K562 (cell line): ENCODE measurements at regions of chr5 and their contacts with region 1.

Region 1: DNA sequence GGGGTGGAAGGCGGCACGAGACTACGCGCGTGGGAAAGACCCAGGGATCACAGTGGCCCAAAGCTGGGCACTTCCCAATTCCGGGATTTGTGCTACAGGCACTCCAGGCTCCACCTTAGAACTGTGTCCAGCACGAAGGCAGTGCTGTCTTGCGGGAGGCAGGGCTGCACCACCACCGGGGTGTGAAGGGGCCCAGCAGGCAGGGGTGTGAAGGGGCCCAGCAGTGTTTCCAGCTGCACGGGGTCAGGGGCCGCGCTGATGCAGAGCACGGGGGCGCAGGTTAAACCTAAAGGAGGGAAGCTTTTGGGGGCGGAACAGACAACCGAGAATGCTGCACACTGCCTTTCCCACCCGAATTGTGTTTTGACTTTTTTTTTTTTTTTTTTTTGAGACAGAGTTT is 1.1 kb upstream of the PDCD6 start:
- DNase-seq: peak in 1 of 4 experiments; percentile 20
- ATAC-seq: no peak
- H3K4me3 ChIP-seq: peak overlapping the region; percentile 96
- H3K27ac ChIP-seq: no peak overlapping the region
- H3K4me1 ChIP-seq: peaks cover 5 to 16% of the 10 kb centered on the region in 2 experiments; a peak in 4 of 5 replicates
- H3K27me3 ChIP-seq: no peaks in the 10 kb centered on the region
- CTCF ChIP-seq: no peak
- EP300 ChIP-seq: no peak
- POLR2A ChIP-seq: no peak
- RAD21 ChIP-seq: no peak

Region 2: DNA sequence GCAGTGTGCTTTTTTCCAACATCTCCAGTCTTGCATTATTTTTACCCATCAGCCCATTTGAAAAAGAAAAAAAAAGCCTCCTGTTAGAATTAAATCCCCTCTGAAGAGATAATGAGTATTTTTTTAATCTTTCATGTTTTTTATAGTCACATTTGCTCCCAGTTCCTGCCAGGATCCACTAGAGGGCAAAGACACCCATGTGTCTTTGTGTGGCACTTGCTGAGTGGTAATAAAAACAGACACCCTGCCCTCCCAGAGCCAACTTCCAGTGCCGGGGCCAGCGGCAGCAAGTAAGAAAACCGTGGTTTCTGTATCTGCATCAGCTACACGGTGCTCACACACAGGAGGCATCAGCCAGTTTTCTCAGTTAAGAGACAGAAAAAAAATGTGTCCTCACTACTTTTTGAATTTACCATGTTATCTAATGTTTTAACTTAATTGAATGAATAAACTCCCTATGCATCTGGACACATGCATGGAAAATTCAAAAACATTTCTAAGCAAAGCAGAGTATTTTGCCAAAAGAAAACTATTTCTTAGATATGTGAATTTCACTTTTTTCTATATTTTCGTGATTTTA is 248.6 kb before region 1 on chr5:
- CTCF ChIA-PET with region 1: no interaction called
- POLR2A ChIA-PET with region 1: no interaction called
- in situ Hi-C with region 1: no loop called
- intact Hi-C with region 1: no loop called
- DNase-seq: no peak
- ATAC-seq: no peak
- H3K4me3 ChIP-seq: no peak overlapping the region
- H3K27ac ChIP-seq: no peak overlapping the region
- H3K4me1 ChIP-seq: no peaks in the 10 kb centered on the region
- H3K27me3 ChIP-seq: peaks cover 0 to 9% of the 10 kb centered on the region in 2 experiments; a peak in 1 of 5 replicates
- CTCF ChIP-seq: peak; percentile 16 to 24 (median 24); a peak in 3 of 6 replicates
- EP300 ChIP-seq: no peak
- POLR2A ChIP-seq: no peak
- RAD21 ChIP-seq: no peak; a peak in 1 of 4 replicates

Region 3: GRCh38 chr5:102411-103043 is 167.8 kb before region 1 on chr5:
- CTCF ChIA-PET with region 1: no interaction called
- POLR2A ChIA-PET with region 1: no interaction called
- in situ Hi-C with region 1: no loop called
- intact Hi-C with region 1: no loop called
- DNase-seq: no peak
- ATAC-seq: no peak
- H3K4me3 ChIP-seq: no peak overlapping the region
- H3K27ac ChIP-seq: no peak overlapping the region
- H3K4me1 ChIP-seq: no peaks in the 10 kb centered on the region
- H3K27me3 ChIP-seq: peaks cover 35 to 45% of the 10 kb centered on the region in 2 experiments; a peak in 4 of 5 replicates
- CTCF ChIP-seq: no peak
- EP300 ChIP-seq: no peak
- POLR2A ChIP-seq: no peak
- RAD21 ChIP-seq: no peak

Region 4: DNA sequence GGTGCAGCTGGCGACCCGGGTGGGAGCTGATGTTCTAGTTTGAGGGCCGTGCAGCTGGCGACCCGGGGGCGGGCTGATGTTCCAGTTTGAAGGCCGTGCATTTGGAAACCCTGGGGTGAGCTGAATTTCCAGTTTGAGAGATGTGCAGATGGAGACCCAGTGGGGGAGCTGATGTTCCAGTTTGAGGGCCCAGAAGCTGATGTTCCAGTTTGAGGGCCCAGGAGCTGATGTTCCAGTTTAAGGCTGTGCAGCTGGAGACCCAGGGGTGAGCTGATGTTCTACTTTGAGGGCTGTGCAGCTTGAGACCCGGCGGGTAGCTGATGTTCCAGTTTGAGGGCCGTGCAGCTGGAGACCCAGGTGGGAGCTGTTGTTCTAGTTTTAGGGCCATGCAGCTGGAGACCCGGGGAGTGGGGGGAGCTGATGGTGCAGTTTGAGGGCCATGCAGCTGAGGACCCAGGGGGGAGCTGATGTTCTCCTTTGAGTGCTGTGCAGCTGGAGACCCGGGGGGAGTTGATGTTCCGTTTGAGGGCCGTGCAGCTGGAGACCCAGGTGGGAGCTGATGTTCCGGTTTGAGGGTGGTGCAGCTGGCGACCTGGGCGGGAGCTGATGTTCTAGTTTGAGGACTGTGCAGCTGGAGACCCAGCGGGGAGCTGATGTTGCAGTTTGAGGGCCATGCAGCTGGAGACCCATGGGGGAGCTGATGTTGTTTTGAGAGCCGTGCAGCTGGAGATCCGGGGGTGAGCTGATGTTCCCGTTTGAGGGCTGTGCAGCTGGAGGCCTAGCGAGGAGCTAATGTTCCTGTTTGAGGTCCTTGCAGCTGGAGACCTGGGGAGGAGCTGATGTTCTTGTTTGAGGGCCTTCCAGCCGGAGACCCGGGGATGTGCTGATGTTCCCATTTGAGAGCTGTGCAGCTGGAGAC is 15.6 kb after region 1 on chr5:
- CTCF ChIA-PET with region 1: no interaction called
- POLR2A ChIA-PET with region 1: interaction called, 45 read pairs
- in situ Hi-C with region 1: no loop called
- intact Hi-C with region 1: no loop called
- DNase-seq: no peak
- ATAC-seq: no peak
- H3K4me3 ChIP-seq: no peak overlapping the region
- H3K27ac ChIP-seq: no peak overlapping the region
- H3K4me1 ChIP-seq: peaks cover 0 to 4% of the 10 kb centered on the region in 2 experiments; a peak in 1 of 5 replicates
- H3K27me3 ChIP-seq: no peaks in the 10 kb centered on the region
- CTCF ChIP-seq: no peak
- EP300 ChIP-seq: no peak
- POLR2A ChIP-seq: no peak
- RAD21 ChIP-seq: no peak

Region 5: DNA sequence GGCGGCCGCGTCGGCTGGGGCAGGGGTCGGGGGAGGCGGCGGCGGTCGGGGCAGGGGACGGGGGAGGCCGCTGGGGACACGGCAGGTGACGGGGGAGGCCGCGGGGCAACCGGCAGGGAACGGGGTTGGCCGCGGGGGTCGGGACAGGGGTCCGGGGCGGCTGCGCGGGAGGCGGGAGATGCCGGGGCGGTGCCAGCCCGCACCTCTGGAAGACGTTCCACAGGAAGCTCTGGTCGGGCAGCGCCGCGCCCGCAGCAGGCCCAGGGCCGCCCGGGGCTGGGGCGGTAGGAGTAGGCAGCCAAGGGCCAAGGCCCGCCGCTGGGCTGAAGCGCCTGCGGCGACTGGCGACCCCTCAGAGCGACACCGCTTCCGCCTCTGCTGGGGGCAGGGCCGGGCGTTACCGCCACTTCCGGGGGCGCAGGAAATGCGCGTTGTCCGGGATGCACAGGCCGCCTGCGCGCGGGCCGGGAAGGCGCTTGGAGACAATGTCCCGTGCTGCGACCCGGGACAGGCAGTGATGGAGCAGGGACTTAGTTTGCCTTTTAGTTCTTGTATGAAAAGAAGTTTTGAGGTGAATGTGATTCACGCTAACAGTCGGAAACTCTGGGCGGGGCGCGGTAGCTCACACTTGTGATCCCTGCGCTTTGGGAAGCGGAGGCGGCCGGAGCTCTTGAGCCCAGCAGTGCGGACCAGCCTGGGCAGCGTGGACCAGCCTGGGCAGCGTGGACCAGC is 1363.4 kb after region 1 on chr5:
- CTCF ChIA-PET with region 1: no interaction called
- POLR2A ChIA-PET with region 1: no interaction called
- in situ Hi-C with region 1: loop called (anchors 5 kb)
- intact Hi-C with region 1: no loop called
- DNase-seq: peak; percentile 92 to 95 (median 92)
- ATAC-seq: peak; percentile 96
- H3K4me3 ChIP-seq: peak overlapping the region; percentile 84
- H3K27ac ChIP-seq: peak overlapping the region; percentile 76
- H3K4me1 ChIP-seq: peaks cover 0 to 34% of the 10 kb centered on the region in 2 experiments; a peak in 2 of 5 replicates
- H3K27me3 ChIP-seq: peaks cover 7 to 19% of the 10 kb centered on the region in 2 experiments; a peak in 4 of 5 replicates
- CTCF ChIP-seq: no peak
- EP300 ChIP-seq: no peak; the same call in 1 of the 2 replicates
- POLR2A ChIP-seq: peak; percentile 90
- RAD21 ChIP-seq: no peak